ENCODE measurements at regions of chr20 and their contacts with region 1.

Region 1: GRCh38 chr20:57388953-57389694 is 2.1 kb upstream of the RBM38 start:
- DNase-seq: peak; percentile 80 to 90
- H3K4me3 ChIP-seq: peak overlapping the region; percentile 35 to 54
- H3K27ac ChIP-seq: peak overlapping the region; percentile 71 to 82
- H3K4me1 ChIP-seq: peaks cover 0 to 45% (median 27%) of the 10 kb centered on the region in 4 donors
- H3K27me3 ChIP-seq: no peaks in the 10 kb centered on the region
- CTCF ChIP-seq: peak; percentile 25 to 35

Region 2: DNA sequence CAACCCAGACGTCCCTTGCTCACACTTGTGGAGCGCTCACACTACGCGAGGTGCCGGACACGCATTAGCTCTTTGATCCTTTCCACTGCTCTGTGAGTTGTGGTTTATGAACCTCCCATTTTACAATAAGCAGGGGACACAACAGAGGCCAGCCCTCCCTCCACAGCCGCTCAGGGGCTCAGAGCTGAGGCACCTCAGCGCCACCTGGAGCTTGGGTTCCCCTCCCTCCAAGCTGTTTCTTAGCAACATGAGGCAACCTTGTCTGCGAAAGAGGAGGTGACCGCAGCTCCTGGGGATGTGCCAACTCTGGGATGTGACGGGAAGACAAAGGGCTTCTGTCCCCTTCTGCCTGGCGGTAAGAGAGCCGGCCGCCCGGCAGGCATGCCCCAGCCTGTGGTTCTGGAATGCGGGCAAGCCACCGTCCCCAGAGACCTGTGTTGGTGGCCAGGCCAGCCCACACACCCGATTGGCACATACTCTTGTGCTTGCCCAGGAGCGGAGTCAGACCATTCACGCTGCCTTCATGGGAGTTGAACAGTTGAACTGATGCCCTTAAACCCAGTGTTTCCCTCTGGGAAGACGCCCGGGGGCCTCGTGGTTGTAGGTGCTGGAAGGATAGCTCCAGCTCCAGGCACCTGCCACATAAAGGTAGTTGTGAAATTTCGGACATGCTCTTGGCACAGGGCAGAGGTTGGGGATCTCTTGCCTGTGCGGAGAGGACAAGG is 46.5 kb after region 1 on chr20:
- intact Hi-C with region 1: loop called (anchors 2 kb)
- DNase-seq: peak; percentile 61 to 90
- H3K4me3 ChIP-seq: no peak overlapping the region
- H3K27ac ChIP-seq: peak overlapping the region; percentile 24 to 95
- H3K4me1 ChIP-seq: peaks cover 9 to 70% (median 55%) of the 10 kb centered on the region in 4 donors
- H3K27me3 ChIP-seq: no peaks in the 10 kb centered on the region
- CTCF ChIP-seq: no peak

Region 3: GRCh38 chr20:57582432-57583305 is 193.5 kb after region 1 on chr20:
- intact Hi-C with region 1: loop called (anchors 5 kb)
- DNase-seq: peak; percentile 74 to 94
- H3K4me3 ChIP-seq: peak overlapping the region; percentile 19 to 32
- H3K27ac ChIP-seq: peak overlapping the region; percentile 87 to 95
- H3K4me1 ChIP-seq: peaks cover 0 to 73% (median 29%) of the 10 kb centered on the region in 4 donors
- H3K27me3 ChIP-seq: peaks cover 0 to 18% of the 10 kb centered on the region in 2 donors
- CTCF ChIP-seq: peak; percentile 31 to 35